ENCODE measurements at regions of chr13 and their contacts with region 1.

Region 1: DNA sequence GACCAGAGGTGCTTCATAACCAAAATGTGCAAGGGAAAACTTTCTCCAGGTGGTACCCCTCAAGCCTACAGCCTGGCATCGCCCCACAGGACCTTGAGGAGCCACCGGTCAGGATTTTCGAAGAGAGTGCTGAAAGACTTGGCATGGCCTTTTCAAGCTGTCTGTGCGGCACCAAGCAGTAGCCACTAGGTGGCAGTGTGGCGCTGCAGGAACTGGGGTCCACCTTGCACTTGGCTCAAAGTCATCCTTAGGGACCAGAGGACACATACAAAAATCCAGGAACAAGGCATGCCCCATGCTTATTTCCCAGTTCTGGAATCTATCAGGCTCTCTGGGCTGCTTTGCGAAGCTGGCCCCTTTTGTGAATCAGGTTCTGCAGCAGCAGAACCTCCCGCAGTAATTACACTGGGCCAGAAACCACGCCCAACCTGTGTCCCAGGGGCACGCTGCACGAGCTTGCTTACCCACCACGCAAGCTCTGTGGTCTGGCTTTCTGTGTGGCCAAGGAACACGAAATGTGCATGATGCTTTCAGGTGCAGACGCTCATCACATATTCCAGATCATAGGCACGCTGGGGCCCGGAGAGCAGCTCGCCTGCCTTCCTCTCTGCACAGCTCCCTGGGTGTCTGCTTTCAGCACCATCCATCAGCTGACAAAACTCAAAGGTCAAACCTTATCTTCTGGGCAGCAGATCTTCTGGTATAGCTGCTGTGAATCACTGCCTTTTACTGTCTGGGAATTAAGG is 87.2 kb downstream of the SLC7A1 start:
- H3K4me3 Mint-ChIP-seq: no peak overlapping the region
- H3K27ac Mint-ChIP-seq: no peak overlapping the region
- H3K4me1 Mint-ChIP-seq: no peaks in the 10 kb centered on the region
- H3K27me3 Mint-ChIP-seq: peaks cover 20% of the 10 kb centered on the region

Region 2: GRCh38 chr13:29621051-29621757 is 112.9 kb after region 1 on chr13:
- intact Hi-C with region 1: no loop called
- H3K4me3 Mint-ChIP-seq: no peak overlapping the region
- H3K27ac Mint-ChIP-seq: no peak overlapping the region
- H3K4me1 Mint-ChIP-seq: no peaks in the 10 kb centered on the region
- H3K27me3 Mint-ChIP-seq: peaks cover 10% of the 10 kb centered on the region

Region 3: GRCh38 chr13:29707876-29708543 is 199.7 kb after region 1 on chr13:
- intact Hi-C with region 1: loop called (anchors 1 kb)
- H3K4me3 Mint-ChIP-seq: no peak overlapping the region
- H3K27ac Mint-ChIP-seq: no peak overlapping the region
- H3K4me1 Mint-ChIP-seq: no peaks in the 10 kb centered on the region
- H3K27me3 Mint-ChIP-seq: peaks cover 15% of the 10 kb centered on the region

Region 4: GRCh38 chr13:29743201-29743786 is 235.0 kb after region 1 on chr13:
- intact Hi-C with region 1: no loop called
- H3K4me3 Mint-ChIP-seq: no peak overlapping the region
- H3K27ac Mint-ChIP-seq: no peak overlapping the region
- H3K4me1 Mint-ChIP-seq: no peaks in the 10 kb centered on the region
- H3K27me3 Mint-ChIP-seq: peaks cover 11% of the 10 kb centered on the region